ENCODE measurements at regions of chr11 and their contacts with region 1.

Region 1: DNA sequence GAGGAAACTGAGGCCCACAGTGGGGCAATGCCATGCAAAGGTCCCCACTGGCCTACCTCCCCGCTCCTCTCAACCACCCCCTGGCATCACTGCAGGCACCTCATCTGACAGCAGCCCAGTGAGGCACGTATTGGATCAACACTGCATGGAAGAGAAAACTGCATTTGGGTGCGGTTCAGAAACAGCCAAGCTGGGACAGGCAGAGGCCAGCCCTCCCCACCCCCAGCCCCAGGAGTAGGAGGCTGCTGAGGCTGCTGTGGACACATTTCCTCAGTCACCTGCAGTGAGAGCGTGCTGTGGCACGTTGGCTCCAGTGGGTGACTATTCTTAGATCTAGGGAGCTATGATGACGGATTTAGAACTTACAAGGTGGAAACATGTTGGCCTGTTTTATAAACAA is 63.7 kb downstream of the KCNC1 start:
- DNase-seq: peak; percentile 57 to 87
- ATAC-seq: peak; percentile 93 to 95 (median 95)
- H3K4me3 ChIP-seq: no peak overlapping the region
- H3K27ac ChIP-seq: peak overlapping the region; percentile 91
- H3K4me1 ChIP-seq: peaks cover 48% of the 10 kb centered on the region
- H3K27me3 ChIP-seq: no peaks in the 10 kb centered on the region
- CTCF ChIP-seq: no peak

Region 2: GRCh38 chr11:17750013-17750800 is 48.0 kb before region 1 on chr11:
- intact Hi-C with region 1: loop called in 1 of 2 experiments (anchors 5 kb)
- DNase-seq: peak in 1 of 2 donors; percentile 43
- ATAC-seq: peak in 3 of 4 donors; percentile 41 to 45 (median 44)
- H3K4me3 ChIP-seq: no peak overlapping the region
- H3K27ac ChIP-seq: peak overlapping the region; percentile 66
- H3K4me1 ChIP-seq: peaks cover 40% of the 10 kb centered on the region
- H3K27me3 ChIP-seq: no peaks in the 10 kb centered on the region
- CTCF ChIP-seq: no peak

Region 3: GRCh38 chr11:17839973-17840611 is 41.8 kb after region 1 on chr11:
- intact Hi-C with region 1: loop called (anchors 5 kb)
- DNase-seq: peak; percentile 41 to 79
- ATAC-seq: peak; percentile 73 to 86 (median 78)
- H3K4me3 ChIP-seq: no peak overlapping the region
- H3K27ac ChIP-seq: peak overlapping the region; percentile 89
- H3K4me1 ChIP-seq: peaks cover 37% of the 10 kb centered on the region
- H3K27me3 ChIP-seq: no peaks in the 10 kb centered on the region
- CTCF ChIP-seq: no peak